ENCODE measurements at regions of chr17 and their contacts with region 1.

Region 1: GRCh38 chr17:3647769-3648555 is 11.4 kb downstream of the CTNS start:
- DNase-seq: peak; percentile 36
- H3K4me3 Mint-ChIP-seq: no peak overlapping the region
- H3K27ac Mint-ChIP-seq: peak overlapping the region; percentile 35
- H3K4me1 Mint-ChIP-seq: peaks cover 17% of the 10 kb centered on the region
- H3K27me3 Mint-ChIP-seq: no peaks in the 10 kb centered on the region

Region 2: GRCh38 chr17:2796164-2797125 is 851.5 kb before region 1 on chr17 and contains the start of gene RAP1GAP2:
- intact Hi-C with region 1: loop called (anchors 10 kb)
- DNase-seq: peak; percentile 79
- H3K4me3 Mint-ChIP-seq: peak within 1 kb of the TSS; percentile 81
- H3K27ac Mint-ChIP-seq: no peak within 1 kb of the TSS
- H3K4me1 Mint-ChIP-seq: peaks cover 65% of the 10 kb centered on the region
- H3K27me3 Mint-ChIP-seq: peaks cover 6% of the 10 kb centered on the region
- total RNA-seq, gene RAP1GAP2: 0.46 and 1.1 TPM in 2 replicates

Region 3: DNA sequence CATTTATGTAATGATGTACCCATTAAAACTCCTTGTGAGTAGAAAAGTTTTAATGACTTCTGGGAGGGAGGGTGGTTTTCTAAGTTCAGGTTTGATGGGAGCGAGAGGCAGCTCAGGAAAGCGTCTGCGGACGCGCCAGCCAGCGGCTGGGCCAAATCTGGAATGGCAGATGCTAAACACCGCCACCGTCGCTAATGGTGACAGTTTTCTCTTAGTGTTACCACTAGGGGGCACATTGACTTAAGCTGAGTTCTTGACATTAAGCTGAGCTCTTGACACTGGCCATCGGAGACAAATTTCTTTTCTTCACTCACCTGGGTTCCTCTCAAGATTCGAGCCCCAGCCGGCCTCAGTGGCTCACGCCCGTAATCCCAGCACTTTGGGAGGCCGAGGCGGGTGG is 45.5 kb before region 1 on chr17:
- intact Hi-C with region 1: loop called (anchors 1 kb)
- DNase-seq: no peak
- H3K4me3 Mint-ChIP-seq: no peak overlapping the region
- H3K27ac Mint-ChIP-seq: no peak overlapping the region
- H3K4me1 Mint-ChIP-seq: no peaks in the 10 kb centered on the region
- H3K27me3 Mint-ChIP-seq: no peaks in the 10 kb centered on the region